Activated CD4-positive, alpha-beta T cell treated with anti-CD3 and anti-CD28 coated beads for 36 hours (primary cell): ENCODE measurements at regions of chr6 and their contacts with region 1.

Region 1: DNA sequence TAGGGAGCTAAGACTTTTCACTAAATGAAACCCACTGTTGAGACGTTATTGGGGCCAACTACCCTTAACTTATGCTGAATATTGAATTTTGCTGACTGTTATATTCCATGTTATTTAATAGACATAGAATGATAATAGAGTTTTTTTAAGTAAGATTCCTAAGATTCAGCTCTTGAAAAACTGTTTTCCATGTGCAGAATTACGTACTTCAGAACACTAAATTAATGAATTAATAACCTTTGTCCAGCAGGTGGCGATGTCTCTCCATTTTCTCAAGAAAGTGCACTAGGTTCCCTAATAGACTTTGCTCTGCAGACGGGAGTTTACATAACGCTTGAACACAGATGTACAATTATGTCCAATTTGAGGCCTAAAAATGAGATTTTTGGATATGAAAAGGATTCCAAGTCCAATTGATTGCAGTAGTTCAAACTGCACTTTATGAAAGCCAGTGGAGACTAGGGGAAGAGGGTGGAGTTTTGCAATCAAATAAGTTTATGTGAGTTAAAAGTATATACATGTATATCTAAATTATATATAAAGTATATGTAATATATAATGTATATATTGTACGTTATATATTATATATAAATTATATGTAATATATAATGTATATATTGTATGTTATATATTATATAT is 282.1 kb downstream of the UST start:
- DNase-seq: peak; percentile 81
- ATAC-seq: no peak
- H3K4me3 Mint-ChIP-seq: peak overlapping the region; percentile 13
- H3K27ac Mint-ChIP-seq: peak overlapping the region; percentile 85
- H3K4me1 Mint-ChIP-seq: peaks cover 45% of the 10 kb centered on the region
- H3K27me3 Mint-ChIP-seq: no peaks in the 10 kb centered on the region

Region 2: DNA sequence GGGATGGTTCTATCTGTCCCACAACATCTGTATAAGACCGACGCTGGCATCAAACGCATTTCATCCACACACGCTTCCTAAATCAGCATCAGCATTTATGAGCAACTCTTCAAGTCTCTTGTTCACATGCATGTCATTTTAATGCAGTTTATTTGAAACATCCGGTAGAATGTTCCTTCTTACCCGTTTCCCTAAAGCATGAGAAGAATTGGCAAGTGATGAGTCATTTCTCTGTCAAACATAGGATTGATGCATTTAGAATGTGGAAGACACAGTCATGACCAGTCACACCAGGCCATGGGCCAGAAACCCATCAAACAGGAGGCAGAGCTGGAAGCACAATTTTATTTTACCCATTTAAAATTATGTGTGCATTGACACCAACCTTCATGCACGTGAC is 159.3 kb before region 1 on chr6:
- CTCF ChIA-PET with region 1: no interaction called
- POLR2A ChIA-PET with region 1: no interaction called
- intact Hi-C with region 1: no loop called
- DNase-seq: no peak
- ATAC-seq: no peak
- H3K4me3 Mint-ChIP-seq: no peak overlapping the region
- H3K27ac Mint-ChIP-seq: no peak overlapping the region
- H3K4me1 Mint-ChIP-seq: peaks cover 28% of the 10 kb centered on the region
- H3K27me3 Mint-ChIP-seq: peaks cover 2% of the 10 kb centered on the region

Region 3: DNA sequence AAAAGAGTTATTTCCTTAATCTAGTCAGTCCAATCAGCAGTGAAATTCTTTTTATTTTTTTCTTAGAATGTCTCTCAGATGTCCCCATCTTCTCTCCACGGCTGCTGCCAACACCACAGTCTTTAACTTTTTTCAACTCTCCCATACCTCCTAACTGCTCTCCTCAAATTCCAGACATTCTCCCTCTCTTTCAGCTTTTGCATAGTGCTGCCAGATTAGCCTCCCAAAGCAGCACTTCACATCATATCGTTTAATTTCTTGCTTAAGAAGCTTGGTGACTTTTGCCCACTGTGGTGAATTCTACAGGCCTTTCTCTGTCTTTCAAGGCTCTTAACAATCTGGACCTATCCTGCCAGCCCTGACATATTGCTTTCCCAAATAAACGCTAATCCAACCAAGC is 48.7 kb before region 1 on chr6:
- CTCF ChIA-PET with region 1: no interaction called
- POLR2A ChIA-PET with region 1: no interaction called
- intact Hi-C with region 1: no loop called
- DNase-seq: no peak
- ATAC-seq: no peak
- H3K4me3 Mint-ChIP-seq: no peak overlapping the region
- H3K27ac Mint-ChIP-seq: no peak overlapping the region
- H3K4me1 Mint-ChIP-seq: no peaks in the 10 kb centered on the region
- H3K27me3 Mint-ChIP-seq: peaks cover 1% of the 10 kb centered on the region

Region 4: GRCh38 chr6:149043476-149044130 is 14.7 kb after region 1 on chr6:
- CTCF ChIA-PET with region 1: interaction called, 11 read pairs
- POLR2A ChIA-PET with region 1: interaction called, 4 read pairs
- intact Hi-C with region 1: no loop called
- DNase-seq: peak; percentile 66
- ATAC-seq: peak; percentile 24
- H3K4me3 Mint-ChIP-seq: no peak overlapping the region
- H3K27ac Mint-ChIP-seq: no peak overlapping the region
- H3K4me1 Mint-ChIP-seq: peaks cover 46% of the 10 kb centered on the region
- H3K27me3 Mint-ChIP-seq: no peaks in the 10 kb centered on the region

Region 5: DNA sequence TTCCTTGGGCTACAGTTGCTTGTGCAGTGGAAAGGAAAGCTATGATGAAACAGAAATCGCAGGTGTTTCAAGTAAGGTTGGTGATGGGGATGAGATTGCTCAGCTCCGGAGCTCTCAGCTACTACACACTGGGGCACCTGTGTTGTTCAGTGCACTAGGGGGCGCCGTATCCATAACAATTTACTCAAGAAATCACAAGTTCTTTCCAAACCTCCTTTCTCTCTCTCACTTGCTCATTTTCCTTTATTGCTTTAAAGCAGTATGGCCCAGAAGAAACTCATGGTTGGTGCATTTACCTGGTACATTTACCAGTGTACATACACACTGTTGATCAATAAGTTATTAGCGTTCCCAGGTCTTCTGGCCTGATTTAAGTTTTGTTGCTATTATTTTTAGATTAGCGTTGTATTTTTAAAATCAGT is 53.4 kb after region 1 on chr6:
- CTCF ChIA-PET with region 1: interaction called, 20 read pairs
- POLR2A ChIA-PET with region 1: interaction called, 3 read pairs
- intact Hi-C with region 1: loop called (anchors 1 kb)
- DNase-seq: peak; percentile 94
- ATAC-seq: peak; percentile 79
- H3K4me3 Mint-ChIP-seq: no peak overlapping the region
- H3K27ac Mint-ChIP-seq: peak overlapping the region; percentile 52
- H3K4me1 Mint-ChIP-seq: peaks cover 51% of the 10 kb centered on the region
- H3K27me3 Mint-ChIP-seq: no peaks in the 10 kb centered on the region

Region 6: GRCh38 chr6:149211046-149211571 is 182.2 kb after region 1 on chr6:
- CTCF ChIA-PET with region 1: no interaction called
- POLR2A ChIA-PET with region 1: no interaction called
- intact Hi-C with region 1: loop called in 1 of 2 experiments (anchors 5 kb)
- DNase-seq: peak; percentile 36
- ATAC-seq: peak; percentile 54
- H3K4me3 Mint-ChIP-seq: no peak overlapping the region
- H3K27ac Mint-ChIP-seq: peak overlapping the region; percentile 82
- H3K4me1 Mint-ChIP-seq: peaks cover 3% of the 10 kb centered on the region
- H3K27me3 Mint-ChIP-seq: no peaks in the 10 kb centered on the region

Region 7: GRCh38 chr6:149335924-149336608 is 307.2 kb after region 1 on chr6:
- CTCF ChIA-PET with region 1: no interaction called
- POLR2A ChIA-PET with region 1: no interaction called
- intact Hi-C with region 1: loop called (anchors 1 to 5 kb)
- DNase-seq: peak; percentile 83
- ATAC-seq: peak; percentile 95
- H3K4me3 Mint-ChIP-seq: peak overlapping the region; percentile 59
- H3K27ac Mint-ChIP-seq: peak overlapping the region; percentile 99
- H3K4me1 Mint-ChIP-seq: peaks cover 85% of the 10 kb centered on the region
- H3K27me3 Mint-ChIP-seq: no peaks in the 10 kb centered on the region

Region 8: GRCh38 chr6:149508485-149508884 is 479.6 kb after region 1 on chr6:
- CTCF ChIA-PET with region 1: interaction called, 5 read pairs
- POLR2A ChIA-PET with region 1: interaction called, 6 read pairs
- intact Hi-C with region 1: loop called (anchors 1 to 5 kb)
- DNase-seq: peak; percentile 60
- ATAC-seq: peak; percentile 90
- H3K4me3 Mint-ChIP-seq: peak overlapping the region; percentile 48
- H3K27ac Mint-ChIP-seq: peak overlapping the region; percentile 99
- H3K4me1 Mint-ChIP-seq: peaks cover 62% of the 10 kb centered on the region
- H3K27me3 Mint-ChIP-seq: no peaks in the 10 kb centered on the region